Activated CD8-positive, alpha-beta T cell treated with anti-CD3 and anti-CD28 coated beads for 36 hours (primary cell): ENCODE measurements at regions of chr4 and their contacts with region 1.

Region 1: DNA sequence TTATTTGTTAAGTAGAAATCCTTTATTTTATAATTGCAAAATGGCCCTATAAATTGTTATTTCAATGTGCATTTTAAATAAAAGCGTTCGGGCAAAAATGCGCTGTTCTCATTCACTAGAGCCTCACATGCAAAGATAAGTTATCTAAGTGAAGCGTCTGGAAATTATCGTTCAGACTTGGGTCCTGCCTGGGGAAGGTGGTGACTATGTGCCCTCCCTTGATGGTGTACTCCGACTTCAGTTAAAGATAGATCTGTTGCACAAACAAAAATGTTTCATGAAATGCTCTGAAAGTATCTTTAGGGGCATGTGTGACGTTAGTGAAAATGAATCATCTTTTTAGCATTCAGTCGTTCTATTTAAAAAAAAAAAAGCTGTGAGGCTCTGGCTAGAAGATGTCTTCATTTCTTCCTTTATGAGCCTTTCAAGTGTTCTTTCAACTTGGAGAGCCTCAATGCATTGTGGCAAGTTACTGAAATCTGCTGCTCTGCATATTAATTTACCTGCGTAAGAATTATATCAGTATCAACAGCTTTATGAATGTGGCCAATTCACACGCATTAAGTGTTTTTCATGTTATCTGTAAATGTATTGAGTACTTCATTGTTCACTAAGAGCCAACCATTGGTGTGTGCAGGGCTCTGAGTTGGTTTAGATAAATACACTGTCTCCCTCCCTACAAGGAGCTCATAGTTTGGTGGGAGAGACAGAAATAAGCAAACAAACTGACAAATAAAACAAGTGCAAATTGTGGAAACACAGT is 83.0 kb downstream of the AFF1 start:
- DNase-seq: peak; percentile 46
- ATAC-seq: peak; percentile 89
- H3K4me3 Mint-ChIP-seq: peak overlapping the region; percentile 12
- H3K27ac Mint-ChIP-seq: peak overlapping the region; percentile 84
- H3K4me1 Mint-ChIP-seq: peaks cover 81% of the 10 kb centered on the region
- H3K27me3 Mint-ChIP-seq: no peaks in the 10 kb centered on the region
- CTCF ChIP-seq: no peak

Region 2: DNA sequence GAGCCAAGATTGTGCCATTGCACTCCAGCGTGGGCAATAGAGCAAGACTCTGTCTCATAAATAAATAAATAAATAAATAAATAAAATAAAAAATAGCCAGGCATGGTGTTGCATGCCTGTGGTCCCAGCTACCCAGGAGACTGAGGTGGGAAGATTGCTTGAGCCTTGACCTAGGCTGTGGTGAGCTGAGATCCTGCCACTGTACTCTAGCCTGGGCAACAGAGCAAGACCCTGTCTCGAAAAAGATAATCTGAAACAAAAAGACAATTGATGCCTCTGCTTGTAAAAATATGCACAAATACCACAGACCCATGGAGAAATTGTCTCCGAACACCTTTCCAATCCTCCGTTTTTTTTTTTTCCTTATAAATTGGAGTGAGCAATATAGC is 76.2 kb before region 1 on chr4:
- CTCF ChIA-PET with region 1: no interaction called
- POLR2A ChIA-PET with region 1: no interaction called
- intact Hi-C with region 1: no loop called
- DNase-seq: no peak
- ATAC-seq: no peak
- H3K4me3 Mint-ChIP-seq: no peak overlapping the region
- H3K27ac Mint-ChIP-seq: no peak overlapping the region
- H3K4me1 Mint-ChIP-seq: peaks cover 57% of the 10 kb centered on the region
- H3K27me3 Mint-ChIP-seq: no peaks in the 10 kb centered on the region
- CTCF ChIP-seq: no peak

Region 3: GRCh38 chr4:87058356-87059073 is 40.8 kb after region 1 on chr4:
- CTCF ChIA-PET with region 1: no interaction called
- POLR2A ChIA-PET with region 1: interaction called, 3 read pairs
- intact Hi-C with region 1: loop called (anchors 5 kb)
- DNase-seq: peak; percentile 74
- ATAC-seq: peak; percentile 84
- H3K4me3 Mint-ChIP-seq: no peak overlapping the region
- H3K27ac Mint-ChIP-seq: peak overlapping the region; percentile 55
- H3K4me1 Mint-ChIP-seq: peaks cover 57% of the 10 kb centered on the region
- H3K27me3 Mint-ChIP-seq: no peaks in the 10 kb centered on the region
- CTCF ChIP-seq: no peak